Activated CD4-positive, alpha-beta T cell treated with anti-CD3 and anti-CD28 coated beads, Interleukin-2, amount 10 ng/mL, durations not matched to agents 24 days and 14 days (primary cell): ENCODE measurements at regions of chr9 and their contacts with region 1.

Region 1: GRCh38 chr9:22073349-22073748 is 64.2 kb upstream of the CDKN2B start:
- DNase-seq: peak; percentile 77
- H3K4me3 Mint-ChIP-seq: peak overlapping the region; percentile 16
- H3K27ac Mint-ChIP-seq: peak overlapping the region; percentile 51
- H3K4me1 Mint-ChIP-seq: peaks cover 46% of the 10 kb centered on the region
- H3K27me3 Mint-ChIP-seq: peaks cover 36% of the 10 kb centered on the region

Region 2: DNA sequence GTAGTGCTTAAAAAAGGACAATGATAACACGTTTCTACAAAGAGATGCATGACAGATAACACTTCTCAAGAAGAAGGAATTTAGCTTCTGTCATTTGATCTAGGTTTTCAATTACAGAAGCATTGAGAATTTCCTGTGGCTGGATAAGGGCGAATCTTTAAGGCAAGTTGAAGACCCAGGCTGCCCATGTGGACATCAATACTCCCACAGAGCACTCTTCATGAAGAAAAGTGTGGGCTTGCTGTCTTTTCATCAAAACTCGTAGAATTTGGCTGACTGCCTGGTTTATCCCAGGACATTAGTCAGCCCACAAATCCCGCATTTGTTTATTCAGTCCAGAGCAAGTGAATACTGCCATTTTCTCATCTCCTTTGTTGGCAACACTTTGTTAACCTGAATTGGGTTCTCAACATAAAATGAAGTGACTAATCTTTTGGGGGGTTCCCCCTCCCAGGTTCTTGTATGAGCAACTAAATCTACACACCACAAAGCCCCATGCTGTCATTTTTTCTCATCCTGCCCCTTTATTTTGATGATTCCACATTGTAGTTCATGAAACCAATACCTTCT is 20.9 kb before region 1 on chr9:
- intact Hi-C with region 1: loop called (anchors 1 kb)
- DNase-seq: peak; percentile 79
- H3K4me3 Mint-ChIP-seq: peak overlapping the region; percentile 42
- H3K27ac Mint-ChIP-seq: peak overlapping the region; percentile 62
- H3K4me1 Mint-ChIP-seq: peaks cover 32% of the 10 kb centered on the region
- H3K27me3 Mint-ChIP-seq: peaks cover 20% of the 10 kb centered on the region

Region 3: GRCh38 chr9:22198681-22199080 is 125.3 kb after region 1 on chr9:
- intact Hi-C with region 1: no loop called
- DNase-seq: no peak
- H3K4me3 Mint-ChIP-seq: no peak overlapping the region
- H3K27ac Mint-ChIP-seq: no peak overlapping the region
- H3K4me1 Mint-ChIP-seq: peaks cover 4% of the 10 kb centered on the region
- H3K27me3 Mint-ChIP-seq: peaks cover 52% of the 10 kb centered on the region